ENCODE measurements at regions of chr6 and their contacts with region 1.

Region 1: GRCh38 chr6:13908955-13909381 is 15.8 kb upstream of the RNF182 start:
- DNase-seq: peak; percentile 82
- ATAC-seq: peak; percentile 88
- H3K4me3 ChIP-seq: no peak overlapping the region
- H3K27ac ChIP-seq: no peak overlapping the region
- H3K4me1 ChIP-seq: peaks cover 23% of the 10 kb centered on the region
- H3K27me3 ChIP-seq: no peaks in the 10 kb centered on the region
- CTCF ChIP-seq: peak; percentile 93

Region 2: GRCh38 chr6:13765570-13765969 is 143.4 kb before region 1 on chr6:
- CTCF ChIA-PET with region 1: interaction called, 10 read pairs
- POLR2A ChIA-PET with region 1: no interaction called
- intact Hi-C with region 1: no loop called
- DNase-seq: peak; percentile 37
- ATAC-seq: no peak; the same call in 1 of the 2 replicates
- H3K4me3 ChIP-seq: no peak overlapping the region
- H3K27ac ChIP-seq: peak overlapping the region; percentile 31
- H3K4me1 ChIP-seq: peaks cover 9% of the 10 kb centered on the region
- H3K27me3 ChIP-seq: no peaks in the 10 kb centered on the region
- CTCF ChIP-seq: no peak

Region 3: DNA sequence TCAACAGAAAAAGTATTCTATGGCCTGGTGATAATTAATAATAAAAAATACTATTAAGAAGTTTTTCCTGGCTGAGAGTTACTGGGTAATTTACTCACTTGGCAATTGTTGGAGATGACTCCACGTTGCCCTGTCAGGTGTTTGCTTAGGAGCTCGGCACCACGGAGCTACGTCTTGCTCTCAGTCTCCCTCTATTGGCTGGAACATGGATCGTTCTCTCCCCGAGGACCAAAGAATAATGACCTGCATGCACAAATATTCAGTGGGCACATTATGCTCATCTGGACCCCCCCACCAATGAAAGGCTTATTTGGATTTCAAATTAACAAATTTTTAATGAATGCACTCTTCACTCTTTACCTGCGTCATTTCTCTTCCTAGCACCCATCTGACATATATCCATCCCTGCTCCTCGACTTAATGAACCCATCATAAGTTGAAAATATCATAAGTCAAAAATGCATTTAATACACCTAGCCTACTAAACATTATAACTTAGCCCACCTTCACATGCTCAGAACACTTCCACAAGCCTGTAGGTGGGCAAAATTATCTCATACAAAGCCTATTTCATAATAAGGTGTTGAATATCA is 137.6 kb after region 1 on chr6:
- CTCF ChIA-PET with region 1: interaction called, 10 read pairs
- POLR2A ChIA-PET with region 1: no interaction called
- intact Hi-C with region 1: loop called (anchors 1 kb)
- DNase-seq: peak; percentile 87
- ATAC-seq: peak; percentile 94
- H3K4me3 ChIP-seq: no peak overlapping the region
- H3K27ac ChIP-seq: no peak overlapping the region
- H3K4me1 ChIP-seq: no peaks in the 10 kb centered on the region; the same call in 1 of the 2 replicates
- H3K27me3 ChIP-seq: no peaks in the 10 kb centered on the region
- CTCF ChIP-seq: peak; percentile 82

Region 4: GRCh38 chr6:14117158-14118090 is 208.5 kb after region 1 on chr6 and contains the start of gene CD83:
- CTCF ChIA-PET with region 1: interaction called, 3 read pairs
- POLR2A ChIA-PET with region 1: no interaction called
- intact Hi-C with region 1: loop called (anchors 2 kb)
- DNase-seq: peak; percentile 72
- ATAC-seq: peak; percentile 80
- H3K4me3 ChIP-seq: peak within 1 kb of the TSS; percentile 89
- H3K27ac ChIP-seq: no peak within 1 kb of the TSS
- H3K4me1 ChIP-seq: peaks cover 8% of the 10 kb centered on the region; the same call in 1 of the 2 replicates
- H3K27me3 ChIP-seq: no peaks in the 10 kb centered on the region
- CTCF ChIP-seq: peak; percentile 52
- total RNA-seq, gene CD83: 13.0 and 15.2 TPM in 2 replicates

Region 5: DNA sequence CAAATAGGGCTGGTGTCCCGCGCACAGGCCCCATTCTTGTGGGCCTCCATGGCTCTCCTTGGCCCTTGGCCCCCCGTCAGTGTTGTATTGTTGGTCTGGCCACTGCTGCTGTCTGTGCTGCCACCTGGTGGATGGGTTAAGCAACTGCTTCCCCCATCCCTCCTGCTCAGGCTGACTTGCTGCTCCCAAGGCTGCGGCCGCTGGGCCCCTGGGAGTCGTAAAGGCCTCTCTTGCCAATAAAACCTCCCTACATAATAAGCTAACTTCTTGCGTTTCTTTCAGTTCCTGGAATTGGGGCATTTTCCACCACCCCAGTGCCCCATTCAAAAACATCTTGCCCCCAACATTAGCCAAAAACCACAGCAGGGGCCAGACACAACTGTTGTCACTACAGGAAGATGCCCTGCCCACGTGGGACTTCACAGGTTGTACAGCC is 235.7 kb after region 1 on chr6:
- CTCF ChIA-PET with region 1: interaction called, 6 read pairs
- POLR2A ChIA-PET with region 1: no interaction called
- intact Hi-C with region 1: loop called (anchors 1 kb)
- DNase-seq: peak; percentile 77
- ATAC-seq: peak; percentile 98
- H3K4me3 ChIP-seq: no peak overlapping the region
- H3K27ac ChIP-seq: no peak overlapping the region
- H3K4me1 ChIP-seq: no peaks in the 10 kb centered on the region
- H3K27me3 ChIP-seq: no peaks in the 10 kb centered on the region
- CTCF ChIP-seq: peak; percentile 95

Region 6: GRCh38 chr6:14192216-14192788 is 283.3 kb after region 1 on chr6:
- CTCF ChIA-PET with region 1: no interaction called
- POLR2A ChIA-PET with region 1: no interaction called
- intact Hi-C with region 1: no loop called
- DNase-seq: peak; percentile 16
- ATAC-seq: no peak; the same call in 1 of the 2 replicates
- H3K4me3 ChIP-seq: no peak overlapping the region
- H3K27ac ChIP-seq: no peak overlapping the region
- H3K4me1 ChIP-seq: no peaks in the 10 kb centered on the region
- H3K27me3 ChIP-seq: no peaks in the 10 kb centered on the region
- CTCF ChIP-seq: peak; percentile 38; the same call in 1 of the 2 replicates

Measured in PC-3 (cell line).